Activated naive CD4-positive, alpha-beta T cell treated with anti-CD3 and anti-CD28 coated beads, Interleukin-2, amount 10 ng/mL, durations not matched to agents 7 days and 5 days (primary cell): ENCODE measurements at regions of chr6 and their contacts with region 1.

Region 1: GRCh38 chr6:5471044-5471443 is 209.7 kb downstream of the FARS2 start:
- DNase-seq: peak; percentile 83
- H3K4me3 Mint-ChIP-seq: no peak overlapping the region
- H3K27ac Mint-ChIP-seq: no peak overlapping the region
- H3K4me1 Mint-ChIP-seq: peaks cover 5% of the 10 kb centered on the region
- H3K27me3 Mint-ChIP-seq: no peaks in the 10 kb centered on the region

Region 2: GRCh38 chr6:5670811-5671561 is 199.9 kb after region 1 on chr6:
- CTCF ChIA-PET with region 1: interaction called, 12 read pairs
- DNase-seq: peak; percentile 48
- H3K4me3 Mint-ChIP-seq: no peak overlapping the region
- H3K27ac Mint-ChIP-seq: peak overlapping the region; percentile 78
- H3K4me1 Mint-ChIP-seq: peaks cover 60% of the 10 kb centered on the region
- H3K27me3 Mint-ChIP-seq: no peaks in the 10 kb centered on the region

Region 3: DNA sequence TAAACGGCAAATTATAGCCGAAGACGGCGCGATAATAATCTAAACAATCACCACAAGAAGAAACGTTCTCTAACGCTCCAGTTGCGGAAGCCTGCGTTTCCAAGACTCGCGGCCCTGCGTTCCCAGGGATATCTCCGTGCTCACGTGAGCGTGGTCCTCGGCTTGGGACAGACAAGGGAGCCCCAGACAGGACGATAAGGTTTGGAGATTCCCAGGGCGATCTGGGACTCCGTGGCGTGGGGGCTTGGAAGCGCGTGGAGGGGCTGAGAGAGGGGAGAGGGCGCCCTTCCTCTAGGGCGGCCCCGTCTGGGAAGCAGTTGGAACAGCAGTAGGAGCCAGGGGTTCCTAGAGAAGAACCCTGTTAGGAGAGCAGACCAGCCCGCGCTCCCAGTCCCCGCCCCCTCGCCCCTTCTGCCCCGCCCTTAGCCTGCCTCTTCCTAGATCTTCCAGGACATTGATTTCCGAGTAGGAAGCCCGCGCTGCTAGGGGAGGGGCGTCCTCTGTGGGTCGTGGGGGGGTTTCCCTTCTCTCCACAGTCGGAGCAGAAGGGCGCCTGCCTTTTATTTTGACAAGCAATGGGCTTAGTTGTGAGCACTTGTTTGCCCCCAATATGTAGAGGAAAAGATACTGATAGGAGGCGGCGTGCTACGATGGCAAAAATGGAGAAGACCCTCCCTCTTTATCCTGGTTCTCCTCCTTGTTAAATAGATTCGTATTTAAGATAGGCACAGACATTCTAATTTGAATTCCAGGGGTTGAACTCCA is 525.1 kb after region 1 on chr6:
- CTCF ChIA-PET with region 1: interaction called, 10 read pairs
- DNase-seq: peak; percentile 59
- H3K4me3 Mint-ChIP-seq: peak overlapping the region; percentile 93
- H3K27ac Mint-ChIP-seq: peak overlapping the region; percentile 73
- H3K4me1 Mint-ChIP-seq: peaks cover 73% of the 10 kb centered on the region
- H3K27me3 Mint-ChIP-seq: peaks cover 100% of the 10 kb centered on the region